Gastrocnemius medialis (tissue), 4 donors: ENCODE measurements at regions of chr7 and their contacts with region 1.

Region 1: DNA sequence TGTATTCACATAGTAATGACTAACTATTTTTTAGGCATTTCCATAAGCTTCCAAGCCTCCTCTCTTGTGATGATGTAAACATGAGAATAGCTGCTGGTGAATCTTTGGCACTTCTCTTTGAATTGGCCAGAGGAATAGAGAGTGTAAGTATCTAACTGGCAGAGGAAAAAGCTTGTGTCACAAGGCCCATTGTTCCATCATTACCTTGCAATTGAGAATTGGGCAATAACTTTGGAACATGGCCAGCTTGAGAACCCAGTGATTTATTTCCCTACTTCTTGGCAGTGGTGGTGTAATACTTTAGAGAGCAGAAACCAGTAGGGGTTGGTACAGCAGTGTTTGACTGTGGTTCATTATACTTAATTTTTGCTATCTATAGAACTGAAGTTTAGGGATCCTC is 12.0 kb downstream of the IFRD1 start:
- DNase-seq: peak; percentile 49 to 76
- ATAC-seq: peak; percentile 97 to 98
- H3K4me3 ChIP-seq: no peak overlapping the region
- H3K27ac ChIP-seq: peak overlapping the region; percentile 72 to 77 (median 74)
- H3K4me1 ChIP-seq: peaks cover 58 to 74% of the 10 kb centered on the region in 2 donors
- H3K27me3 ChIP-seq: no peaks in the 10 kb centered on the region
- CTCF ChIP-seq: no peak
- POLR2A ChIP-seq: no peak

Region 2: GRCh38 chr7:110568932-110569331 is 1893.3 kb before region 1 on chr7:
- in situ Hi-C with region 1: no loop called
- intact Hi-C with region 1: no loop called
- DNase-seq: no peak
- ATAC-seq: no peak
- H3K4me3 ChIP-seq: no peak overlapping the region
- H3K27ac ChIP-seq: no peak overlapping the region
- H3K4me1 ChIP-seq: no peaks in the 10 kb centered on the region
- H3K27me3 ChIP-seq: no peaks in the 10 kb centered on the region
- CTCF ChIP-seq: no peak
- POLR2A ChIP-seq: no peak

Region 3: GRCh38 chr7:112481833-112482670 is 19.8 kb after region 1 on chr7:
- in situ Hi-C with region 1: no loop called
- intact Hi-C with region 1: loop called (anchors 1 kb)
- DNase-seq: peak; percentile 86 to 95
- ATAC-seq: peak; percentile 87 to 90
- H3K4me3 ChIP-seq: peak overlapping the region; percentile 16 to 32 (median 30)
- H3K27ac ChIP-seq: peak overlapping the region; percentile 87 to 96 (median 92)
- H3K4me1 ChIP-seq: peaks cover 43 to 53% of the 10 kb centered on the region in 2 donors
- H3K27me3 ChIP-seq: no peaks in the 10 kb centered on the region
- CTCF ChIP-seq: peak in 1 of 5 experiments; percentile 12
- POLR2A ChIP-seq: peak; percentile 80 to 91

Region 4: DNA sequence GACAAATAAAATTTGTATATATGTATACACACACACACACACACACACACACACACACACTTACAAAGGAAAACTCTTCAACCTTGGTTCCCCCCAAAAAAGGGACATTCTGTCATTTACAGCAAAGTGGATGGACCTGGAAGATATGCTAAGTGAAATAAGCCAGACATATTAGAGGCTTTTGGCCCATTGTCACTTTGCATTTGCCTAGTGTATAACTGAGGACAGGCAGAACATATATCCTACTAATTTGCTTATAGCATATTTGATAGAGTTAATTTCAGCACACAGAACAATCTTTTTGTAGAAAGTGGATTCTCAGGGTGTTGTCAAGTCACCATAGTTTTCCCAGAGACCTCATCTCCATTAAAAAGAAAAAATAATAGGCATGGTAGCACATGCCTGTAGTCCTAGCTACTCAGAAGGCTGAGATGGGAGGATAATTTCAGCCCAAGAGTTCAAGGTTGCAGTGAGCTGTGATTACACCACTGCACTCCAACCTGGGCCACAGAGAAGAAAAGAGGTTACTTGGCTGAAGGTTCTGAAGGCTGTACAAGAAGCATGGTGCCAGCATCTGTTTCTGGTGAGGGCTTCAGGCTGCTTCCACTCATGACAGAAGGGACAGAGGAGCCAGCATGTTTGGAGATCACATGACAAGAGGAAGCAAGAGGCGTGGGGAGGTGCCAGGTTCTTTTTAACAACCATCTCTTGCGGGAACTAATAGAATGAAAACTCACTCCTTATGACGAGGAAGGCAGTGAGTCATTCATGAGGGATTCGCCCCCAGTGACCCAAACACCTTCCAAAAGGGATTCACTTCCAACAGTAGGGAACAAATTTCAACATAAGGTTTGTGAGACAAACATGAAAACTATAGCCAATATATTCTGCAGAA is 192.3 kb after region 1 on chr7:
- in situ Hi-C with region 1: no loop called
- intact Hi-C with region 1: no loop called
- DNase-seq: no peak
- ATAC-seq: no peak
- H3K4me3 ChIP-seq: no peak overlapping the region
- H3K27ac ChIP-seq: no peak overlapping the region
- H3K4me1 ChIP-seq: no peaks in the 10 kb centered on the region
- H3K27me3 ChIP-seq: no peaks in the 10 kb centered on the region
- CTCF ChIP-seq: no peak
- POLR2A ChIP-seq: no peak